ENCODE measurements at regions of chr17 and their contacts with region 1.

Region 1: DNA sequence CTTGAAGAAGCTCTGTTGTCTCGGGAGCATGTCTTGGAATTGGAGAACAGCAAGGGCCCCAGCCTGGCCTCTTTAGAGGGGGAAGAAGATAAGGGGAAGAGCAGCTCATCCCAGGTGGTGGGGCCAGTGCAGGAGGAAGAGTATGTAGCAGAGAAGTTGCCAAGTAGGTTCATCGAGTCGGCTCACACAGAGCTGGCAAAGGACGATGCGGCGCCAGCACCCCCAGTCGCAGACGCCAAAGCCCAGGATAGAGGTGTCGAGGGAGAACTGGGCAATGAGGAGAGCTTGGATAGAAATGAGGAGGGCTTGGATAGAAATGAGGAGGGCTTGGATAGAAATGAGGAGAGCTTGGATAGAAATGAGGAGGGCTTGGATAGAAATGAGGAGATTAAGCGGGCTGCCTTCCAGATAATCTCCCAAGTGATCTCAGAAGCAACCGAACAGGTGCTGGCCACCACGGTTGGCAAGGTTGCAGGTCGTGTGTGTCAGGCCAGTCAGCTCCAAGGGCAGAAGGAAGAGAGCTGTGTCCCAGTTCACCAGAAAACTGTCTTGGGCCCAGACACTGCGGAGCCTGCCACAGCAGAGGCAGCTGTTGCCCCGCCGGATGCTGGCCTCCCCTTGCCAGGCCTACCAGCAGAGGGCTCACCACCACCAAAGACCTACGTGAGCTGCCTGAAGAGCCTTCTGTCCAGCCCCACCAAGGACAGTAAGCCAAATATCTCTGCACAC is 21.2 kb downstream of the AKAP1 start:
- DNase-seq: no peak

Region 2: GRCh38 chr17:57009737-57010445 is 96.4 kb before region 1 on chr17:
- intact Hi-C with region 1: loop called (anchors 10 kb)
- DNase-seq: peak in 7 of 10 donors; percentile 26 to 90 (median 52)

Region 3: GRCh38 chr17:57051886-57052361 is 54.3 kb before region 1 on chr17:
- intact Hi-C with region 1: no loop called
- DNase-seq: peak in 2 of 10 donors; percentile 15 to 26

Region 4: GRCh38 chr17:57215311-57215710 is 109.0 kb after region 1 on chr17:
- intact Hi-C with region 1: no loop called
- DNase-seq: no peak

Measured in posterior cingulate gyrus (tissue), 11 donors.